Activated CD4-positive, alpha-beta T cell treated with anti-CD3 and anti-CD28 coated beads for 36 hours (primary cell): ENCODE measurements at regions of chr21 and their contacts with region 1.

Region 1: GRCh38 chr21:37257967-37258877 is 8.9 kb downstream of the VPS26C start:
- DNase-seq: peak; percentile 92
- ATAC-seq: peak; percentile 87
- H3K4me3 Mint-ChIP-seq: peak overlapping the region; percentile 79
- H3K27ac Mint-ChIP-seq: peak overlapping the region; percentile 93
- H3K4me1 Mint-ChIP-seq: peaks cover 31% of the 10 kb centered on the region
- H3K27me3 Mint-ChIP-seq: no peaks in the 10 kb centered on the region

Region 2: DNA sequence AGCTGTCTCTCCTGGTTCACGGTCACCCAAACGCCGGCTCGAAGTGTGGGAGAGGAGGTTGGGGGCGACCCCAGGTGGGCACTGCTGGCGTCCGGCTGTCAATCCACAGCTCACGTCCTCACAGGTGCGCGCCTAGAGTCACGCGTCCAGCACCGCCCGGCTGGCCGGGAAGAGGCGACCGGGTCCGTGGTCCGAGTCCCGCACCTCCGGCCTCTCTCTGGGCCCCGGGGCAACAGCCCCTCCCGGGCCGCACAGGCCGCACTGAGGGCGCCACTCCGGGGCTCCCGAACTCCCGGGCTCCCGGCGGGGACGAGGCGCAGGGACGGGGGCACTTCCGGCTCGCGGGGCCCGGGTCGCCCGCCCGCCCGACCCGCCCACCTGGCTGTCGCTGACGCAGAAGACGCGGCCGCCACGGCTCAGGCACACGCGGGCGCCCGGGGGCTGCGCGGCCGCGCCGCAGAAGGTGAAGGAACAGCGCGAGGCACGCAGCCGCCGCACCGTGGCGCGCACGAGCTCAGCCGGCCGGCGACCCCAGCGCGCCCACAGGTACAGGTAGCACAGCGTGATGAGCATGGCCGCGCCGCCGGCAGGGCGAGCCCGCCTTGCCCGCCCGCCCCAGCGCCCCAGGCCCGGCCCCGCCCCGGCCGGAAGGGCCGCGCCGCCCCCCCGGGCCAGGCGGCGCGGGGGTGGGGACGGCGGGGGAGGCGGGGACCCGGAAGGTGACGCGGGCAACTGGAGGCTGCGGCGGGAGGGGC is 292.0 kb before region 1 on chr21 and contains the start of gene HLCS:
- CTCF ChIA-PET with region 1: no interaction called
- POLR2A ChIA-PET with region 1: no interaction called
- intact Hi-C with region 1: loop called in 1 of 2 experiments (anchors 5 kb)
- DNase-seq: peak; percentile 84
- ATAC-seq: peak; percentile 90
- H3K4me3 Mint-ChIP-seq: peak within 1 kb of the TSS; percentile 73
- H3K27ac Mint-ChIP-seq: peak within 1 kb of the TSS; percentile 88
- H3K4me1 Mint-ChIP-seq: peaks cover 9% of the 10 kb centered on the region
- H3K27me3 Mint-ChIP-seq: no peaks in the 10 kb centered on the region
- total RNA-seq, gene HLCS: 14.3 to 15.0 TPM